ENCODE measurements at regions of chr4 and their contacts with region 1.

Region 1: DNA sequence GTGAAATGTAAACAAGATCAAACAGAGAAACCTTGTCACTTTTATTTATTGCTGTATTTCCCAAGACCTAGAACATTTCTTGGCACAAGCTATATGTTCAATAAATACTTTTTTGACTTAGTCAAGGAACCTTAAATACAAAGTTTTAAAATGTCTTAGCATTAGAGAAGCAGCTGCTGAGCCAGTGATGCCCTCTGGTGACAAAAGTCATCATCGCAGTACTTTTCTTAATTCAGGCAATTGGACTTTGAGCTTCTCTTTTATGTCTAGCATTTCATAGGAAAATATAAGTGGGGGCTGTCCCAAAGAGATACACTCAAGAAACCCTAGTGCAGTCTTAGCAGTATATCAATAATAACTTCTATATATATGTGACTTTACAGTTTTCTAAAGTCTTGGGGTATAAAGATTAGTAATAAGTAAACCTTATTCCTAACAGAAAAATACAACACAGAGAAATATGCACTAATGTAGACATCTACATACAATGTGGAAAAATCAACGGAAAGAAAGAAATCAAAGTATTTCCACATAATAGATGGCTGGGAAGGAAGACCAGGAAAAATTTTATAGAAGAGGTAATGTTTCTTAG is 118.4 kb downstream of the DTHD1 start:
- DNase-seq: peak; percentile 66
- ATAC-seq: peak; percentile 51
- H3K4me3 Mint-ChIP-seq: no peak overlapping the region
- H3K27ac Mint-ChIP-seq: no peak overlapping the region
- H3K4me1 Mint-ChIP-seq: no peaks in the 10 kb centered on the region
- H3K27me3 Mint-ChIP-seq: peaks cover 15% of the 10 kb centered on the region

Region 2: DNA sequence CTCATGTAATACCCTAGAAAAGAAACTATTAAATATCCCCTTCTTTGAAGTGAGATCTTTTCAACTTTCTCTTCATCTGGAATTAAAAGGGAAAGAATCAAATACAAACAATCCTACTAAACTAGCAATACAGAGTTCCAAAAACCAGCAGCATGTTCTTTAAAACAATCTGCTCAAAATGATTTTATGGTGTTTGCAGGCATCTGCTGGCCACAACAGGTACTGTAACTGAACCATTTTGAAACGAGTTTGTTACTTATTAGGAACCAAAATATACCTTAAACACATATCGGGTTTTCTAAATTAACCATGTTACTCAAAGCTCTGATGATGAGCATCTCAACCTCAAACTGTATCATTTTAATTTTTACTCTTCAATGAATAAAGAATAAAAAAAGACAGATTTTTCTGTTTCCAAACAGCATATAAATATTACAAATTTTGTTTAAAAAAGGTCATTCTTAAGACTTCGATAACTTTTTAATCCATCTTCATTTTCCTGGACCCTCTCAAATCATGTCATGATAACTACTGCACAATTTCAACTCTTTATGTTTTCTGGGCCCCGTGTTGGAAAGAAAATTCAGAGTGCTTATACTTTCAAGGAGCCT is 212.0 kb before region 1 on chr4:
- CTCF ChIA-PET with region 1: interaction called, 24 read pairs
- POLR2A ChIA-PET with region 1: no interaction called
- DNase-seq: peak; percentile 38
- ATAC-seq: no peak
- H3K4me3 Mint-ChIP-seq: no peak overlapping the region
- H3K27ac Mint-ChIP-seq: no peak overlapping the region
- H3K4me1 Mint-ChIP-seq: peaks cover 46% of the 10 kb centered on the region
- H3K27me3 Mint-ChIP-seq: no peaks in the 10 kb centered on the region

Region 3: DNA sequence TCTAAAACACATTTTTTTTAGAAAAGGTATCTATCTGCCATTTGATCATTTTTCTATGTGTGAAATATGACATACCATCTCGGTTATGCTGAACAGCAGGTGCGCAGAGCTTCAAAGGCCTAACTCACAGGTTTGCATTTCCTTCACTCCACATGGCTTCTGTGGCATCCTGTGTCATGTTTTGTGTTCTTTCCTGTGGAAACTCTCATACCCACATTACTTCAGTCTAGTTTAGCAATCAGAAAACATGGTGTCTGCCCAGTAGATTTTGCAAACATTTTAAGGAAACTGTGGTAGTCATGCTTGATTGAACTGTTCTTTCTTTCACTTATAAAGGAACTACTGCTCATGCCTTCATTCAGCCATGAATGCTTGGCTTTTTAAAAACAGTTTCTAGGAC is 144.3 kb before region 1 on chr4:
- CTCF ChIA-PET with region 1: interaction called, 62 read pairs
- POLR2A ChIA-PET with region 1: no interaction called
- DNase-seq: peak; percentile 85
- ATAC-seq: peak; percentile 95
- H3K4me3 Mint-ChIP-seq: peak overlapping the region; percentile 72
- H3K27ac Mint-ChIP-seq: peak overlapping the region; percentile 94
- H3K4me1 Mint-ChIP-seq: peaks cover 45% of the 10 kb centered on the region
- H3K27me3 Mint-ChIP-seq: no peaks in the 10 kb centered on the region

Region 4: DNA sequence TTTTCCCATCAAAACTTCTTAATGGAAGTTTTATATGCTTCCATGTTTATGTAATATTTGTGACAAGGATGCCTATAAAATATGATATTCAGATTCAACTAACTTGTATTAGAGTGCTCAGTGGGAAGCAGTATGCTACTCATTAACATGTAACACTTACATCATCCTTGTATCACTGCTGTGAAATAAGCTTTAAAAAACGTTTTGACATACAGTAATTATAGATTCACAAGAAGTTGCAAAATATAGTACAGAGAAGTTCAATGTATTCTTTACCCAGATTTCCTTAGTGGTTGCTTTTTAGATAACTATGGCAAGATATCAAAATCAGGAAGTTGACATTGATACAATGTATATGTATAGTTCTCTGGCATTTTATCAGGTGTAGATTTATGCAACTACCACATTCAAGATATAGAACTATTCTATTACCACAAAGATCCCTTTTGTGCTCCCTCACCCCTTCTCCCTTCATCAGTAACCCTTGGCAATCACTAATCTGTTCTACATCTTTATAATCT is 62.1 kb before region 1 on chr4:
- CTCF ChIA-PET with region 1: interaction called, 11 read pairs
- POLR2A ChIA-PET with region 1: no interaction called
- DNase-seq: no peak
- ATAC-seq: no peak
- H3K4me3 Mint-ChIP-seq: no peak overlapping the region
- H3K27ac Mint-ChIP-seq: no peak overlapping the region
- H3K4me1 Mint-ChIP-seq: peaks cover 23% of the 10 kb centered on the region
- H3K27me3 Mint-ChIP-seq: no peaks in the 10 kb centered on the region

Region 5: GRCh38 chr4:36363024-36363423 is 36.8 kb before region 1 on chr4:
- CTCF ChIA-PET with region 1: interaction called, 26 read pairs
- POLR2A ChIA-PET with region 1: no interaction called
- DNase-seq: no peak
- ATAC-seq: no peak
- H3K4me3 Mint-ChIP-seq: no peak overlapping the region
- H3K27ac Mint-ChIP-seq: no peak overlapping the region
- H3K4me1 Mint-ChIP-seq: no peaks in the 10 kb centered on the region
- H3K27me3 Mint-ChIP-seq: no peaks in the 10 kb centered on the region

Region 6: DNA sequence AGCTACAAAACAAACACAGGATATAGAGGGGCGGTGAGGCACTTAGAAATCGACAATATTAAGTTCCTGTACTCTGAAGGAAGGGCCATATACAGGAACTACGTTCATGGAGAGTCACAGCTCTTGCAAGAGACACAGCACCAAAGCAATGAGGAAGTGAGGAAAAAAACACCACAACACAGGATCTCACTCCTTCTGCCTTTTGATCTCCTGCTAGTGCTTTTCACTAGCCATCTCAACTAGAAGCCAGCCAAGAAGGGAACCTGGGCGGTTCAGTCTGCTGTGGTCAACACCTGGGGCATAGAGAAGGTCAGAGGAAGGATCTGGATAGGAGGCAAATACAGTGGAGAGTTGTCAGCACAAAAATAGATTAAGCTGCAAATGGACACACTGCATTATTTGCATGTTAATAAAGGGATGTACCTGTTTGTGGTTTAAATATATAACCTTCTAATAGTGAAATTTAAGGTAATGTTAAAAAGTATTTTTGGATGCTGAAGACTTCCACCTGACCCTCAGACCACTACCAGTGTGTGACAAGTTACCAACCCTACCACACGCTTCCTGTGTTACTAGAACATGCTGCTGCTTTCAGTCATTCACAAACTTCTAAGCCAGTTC is 13.8 kb before region 1 on chr4:
- CTCF ChIA-PET with region 1: interaction called, 51 read pairs
- POLR2A ChIA-PET with region 1: no interaction called
- DNase-seq: peak; percentile 64
- ATAC-seq: peak; percentile 91
- H3K4me3 Mint-ChIP-seq: peak overlapping the region; percentile 49
- H3K27ac Mint-ChIP-seq: peak overlapping the region; percentile 95
- H3K4me1 Mint-ChIP-seq: peaks cover 25% of the 10 kb centered on the region
- H3K27me3 Mint-ChIP-seq: peaks cover 2% of the 10 kb centered on the region